Dendritic cell treated with granulocyte-macrophage colony-stimulating factor and Interleukin-4, amounts not matched to agents 40 ng/mL and 50 ng/mL, for 4 days (primary cell): ENCODE measurements at regions of chr5 and their contacts with region 1.

Region 1: GRCh38 chr5:69444127-69444754 is 29.3 kb downstream of the MARVELD2 start:
- H3K4me3 Mint-ChIP-seq: no peak overlapping the region
- H3K27ac Mint-ChIP-seq: no peak overlapping the region
- H3K4me1 Mint-ChIP-seq: peaks cover 7% of the 10 kb centered on the region
- H3K27me3 Mint-ChIP-seq: no peaks in the 10 kb centered on the region

Region 2: DNA sequence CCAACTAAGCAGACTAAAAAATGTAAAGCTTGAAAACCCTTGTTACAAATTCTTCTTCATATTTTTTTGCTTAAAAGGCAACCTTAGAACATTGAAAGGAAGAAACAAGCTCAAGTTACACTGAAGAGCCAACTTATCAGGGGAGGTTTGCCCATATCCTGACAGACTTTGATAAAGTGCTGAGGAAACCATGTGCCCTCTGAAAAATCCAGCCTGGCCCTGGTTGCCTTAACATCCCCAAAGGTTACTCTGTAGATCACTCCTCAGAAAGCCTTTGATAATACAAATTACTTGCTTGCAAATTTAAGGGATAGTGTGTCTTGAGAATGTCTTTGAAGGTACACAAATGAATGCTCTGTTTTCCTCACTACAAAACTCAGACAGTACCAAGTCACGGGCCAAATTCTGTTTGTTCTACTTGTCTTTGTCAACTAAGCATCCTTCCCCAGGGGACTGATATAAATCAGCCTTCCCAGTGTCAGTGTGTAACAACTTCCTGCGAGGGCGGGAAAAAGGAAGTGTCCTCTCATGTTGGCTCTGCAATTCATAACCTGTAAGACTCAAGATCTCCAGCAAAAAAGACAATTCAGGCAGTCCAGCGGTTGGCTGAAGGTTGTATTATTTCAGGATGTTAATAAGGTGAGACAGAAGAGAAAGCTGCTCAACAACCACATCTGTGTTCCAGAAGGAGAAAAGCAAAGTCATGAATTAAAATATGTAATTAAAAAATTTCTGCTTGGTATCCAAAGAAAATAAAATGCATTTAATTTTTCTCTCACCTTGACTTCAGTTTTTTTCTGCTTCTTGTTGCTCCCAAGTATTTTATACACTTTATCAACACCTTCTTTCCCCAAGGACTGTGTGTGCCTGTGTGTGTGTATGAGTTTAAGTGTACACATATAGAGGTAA is 1028.8 kb before region 1 on chr5:
- intact Hi-C with region 1: no loop called
- H3K4me3 Mint-ChIP-seq: no peak overlapping the region
- H3K27ac Mint-ChIP-seq: no peak overlapping the region
- H3K4me1 Mint-ChIP-seq: peaks cover 14% of the 10 kb centered on the region
- H3K27me3 Mint-ChIP-seq: no peaks in the 10 kb centered on the region

Region 3: GRCh38 chr5:69492391-69492922 is 48.2 kb after region 1 on chr5 and contains the start of gene OCLN:
- intact Hi-C with region 1: loop called (anchors 10 kb)
- H3K4me3 Mint-ChIP-seq: peak within 1 kb of the TSS; percentile 86
- H3K27ac Mint-ChIP-seq: peak within 1 kb of the TSS; percentile 34
- H3K4me1 Mint-ChIP-seq: peaks cover 14% of the 10 kb centered on the region
- H3K27me3 Mint-ChIP-seq: peaks cover 36% of the 10 kb centered on the region